PC-3 (cell line): ENCODE measurements at regions of chr9 and their contacts with region 1.

Region 1: DNA sequence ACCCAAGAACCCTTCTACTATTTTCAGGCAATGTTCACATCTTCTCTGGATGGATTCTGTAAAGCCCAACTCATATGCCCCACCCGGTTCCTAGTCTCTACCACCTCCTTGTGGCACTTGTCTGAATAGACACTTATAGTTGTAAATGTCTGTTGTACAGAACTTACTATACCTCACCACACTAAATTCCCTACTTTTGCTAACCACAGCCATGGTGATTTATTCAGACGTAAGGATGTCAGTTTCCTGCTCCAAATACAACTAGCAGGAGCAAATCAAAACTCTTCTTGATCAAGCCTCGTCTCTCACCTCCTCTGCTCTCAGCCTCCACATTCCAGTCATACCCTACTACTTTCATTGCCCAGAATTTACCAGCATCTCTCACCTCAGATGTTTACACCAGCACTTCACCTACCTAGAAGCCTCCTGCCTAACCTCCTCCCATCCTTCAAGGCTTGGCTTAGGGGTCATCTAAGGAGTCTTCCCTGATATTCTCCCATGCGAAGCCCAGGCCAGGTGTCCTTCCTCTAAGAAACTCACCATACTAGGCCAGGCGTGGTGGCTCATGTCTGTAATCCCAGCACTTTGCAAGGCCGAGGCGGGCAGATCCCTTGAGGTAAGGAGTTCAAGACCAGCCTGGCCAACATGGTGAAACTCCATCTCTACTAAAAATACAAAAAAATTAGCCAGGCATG is 75.5 kb downstream of the MAPKAP1 start:
- DNase-seq: peak; percentile 56
- ATAC-seq: peak; percentile 25; the same call in 1 of the 2 replicates
- H3K4me3 ChIP-seq: no peak overlapping the region
- H3K27ac ChIP-seq: peak overlapping the region; percentile 77
- H3K4me1 ChIP-seq: peaks cover 35% of the 10 kb centered on the region
- H3K27me3 ChIP-seq: no peaks in the 10 kb centered on the region
- CTCF ChIP-seq: peak; percentile 70

Region 2: DNA sequence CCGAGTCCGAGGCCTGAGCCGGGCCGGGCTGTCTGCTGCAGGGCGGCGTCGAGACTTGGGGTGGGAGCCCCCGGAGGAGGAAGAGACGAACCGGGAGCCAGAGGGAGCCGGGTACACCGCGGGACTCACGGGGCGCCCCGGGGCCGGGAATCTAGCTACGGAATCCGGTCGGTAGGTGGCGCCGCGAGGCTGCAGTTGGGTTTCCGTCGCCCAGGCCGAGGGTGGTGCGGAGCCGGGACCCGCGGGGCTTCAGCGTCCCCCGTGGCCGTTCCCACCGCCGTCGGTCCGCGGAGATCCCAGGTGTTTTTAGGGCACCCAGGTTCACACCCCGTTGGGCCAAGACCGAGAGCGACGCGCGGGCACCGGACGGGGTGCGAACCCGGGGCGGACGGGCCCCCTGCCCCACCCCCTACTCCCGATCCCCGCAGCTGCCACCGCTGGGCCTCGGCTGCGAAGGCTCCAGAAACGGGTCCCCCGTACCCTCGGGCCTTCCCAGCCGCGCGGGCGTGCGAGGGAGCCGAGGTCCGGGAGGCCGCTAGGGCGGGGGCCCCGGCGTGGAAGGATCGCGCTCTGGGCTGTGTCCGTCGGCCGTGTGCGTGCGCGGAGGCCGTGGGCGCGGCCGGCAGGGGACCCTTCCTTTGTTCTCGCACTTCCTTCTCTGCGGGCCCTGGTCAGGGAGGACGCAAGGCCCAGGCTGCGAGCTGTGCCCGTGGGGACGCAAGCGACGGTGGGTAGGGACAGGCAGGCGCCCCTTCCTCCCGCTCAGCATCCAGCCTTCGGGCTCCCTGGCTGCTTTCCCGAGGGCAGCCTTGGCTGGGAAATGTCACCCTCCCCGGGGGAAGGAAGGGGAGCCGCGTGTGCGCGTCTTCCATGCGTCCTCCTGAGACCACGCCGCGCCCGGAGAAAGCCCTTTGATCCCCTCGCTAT is 223.3 kb before region 1 on chr9:
- CTCF ChIA-PET with region 1: no interaction called
- POLR2A ChIA-PET with region 1: no interaction called
- intact Hi-C with region 1: loop called (anchors 2 kb)
- DNase-seq: peak; percentile 72
- ATAC-seq: peak; percentile 82
- H3K4me3 ChIP-seq: peak overlapping the region; percentile 72
- H3K27ac ChIP-seq: no peak overlapping the region
- H3K4me1 ChIP-seq: peaks cover 8% of the 10 kb centered on the region
- H3K27me3 ChIP-seq: no peaks in the 10 kb centered on the region
- CTCF ChIP-seq: peak; percentile 74

Region 3: DNA sequence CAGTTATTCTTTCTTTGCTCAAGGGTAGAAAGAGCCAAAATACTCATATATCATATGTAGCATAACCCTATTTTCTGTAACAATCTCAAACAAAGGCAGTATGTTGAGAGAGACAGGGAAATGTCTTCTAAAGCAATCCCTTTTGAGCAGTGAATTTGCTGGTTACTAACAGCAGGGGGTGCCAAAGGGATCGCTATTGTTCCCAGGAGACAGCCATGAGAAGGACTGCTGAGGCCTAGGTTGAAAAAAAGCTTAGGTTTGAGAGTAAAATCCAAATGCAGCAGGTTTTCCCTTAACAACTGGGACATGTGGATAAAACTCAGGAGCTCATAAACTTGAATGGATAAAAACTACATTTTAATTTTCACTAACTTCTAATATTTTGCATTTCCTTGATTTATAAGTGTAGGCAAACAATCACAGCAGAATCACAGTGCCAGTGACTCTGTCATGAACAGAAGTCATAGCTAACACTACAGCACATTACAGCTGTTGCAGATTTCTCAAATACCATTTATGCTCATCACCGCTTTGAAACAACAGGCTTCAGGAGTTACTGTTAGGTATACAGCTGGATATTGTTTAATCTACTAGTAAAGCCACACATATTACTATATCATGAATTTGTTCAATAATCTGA is 73.0 kb before region 1 on chr9:
- CTCF ChIA-PET with region 1: no interaction called
- POLR2A ChIA-PET with region 1: no interaction called
- intact Hi-C with region 1: loop called (anchors 5 kb)
- DNase-seq: peak; percentile 70
- ATAC-seq: peak; percentile 63
- H3K4me3 ChIP-seq: no peak overlapping the region
- H3K27ac ChIP-seq: no peak overlapping the region
- H3K4me1 ChIP-seq: no peaks in the 10 kb centered on the region
- H3K27me3 ChIP-seq: no peaks in the 10 kb centered on the region
- CTCF ChIP-seq: peak; percentile 78

Region 4: GRCh38 chr9:125659954-125660353 is 28.4 kb after region 1 on chr9:
- CTCF ChIA-PET with region 1: no interaction called
- POLR2A ChIA-PET with region 1: no interaction called
- intact Hi-C with region 1: no loop called
- DNase-seq: peak; percentile 1
- ATAC-seq: no peak
- H3K4me3 ChIP-seq: no peak overlapping the region
- H3K27ac ChIP-seq: no peak overlapping the region
- H3K4me1 ChIP-seq: peaks cover 12% of the 10 kb centered on the region; the same call in 1 of the 2 replicates
- H3K27me3 ChIP-seq: no peaks in the 10 kb centered on the region
- CTCF ChIP-seq: no peak

Region 5: GRCh38 chr9:125674981-125675973 is 43.7 kb after region 1 on chr9:
- CTCF ChIA-PET with region 1: no interaction called
- POLR2A ChIA-PET with region 1: no interaction called
- intact Hi-C with region 1: no loop called
- DNase-seq: peak; percentile 80
- ATAC-seq: peak; percentile 90
- H3K4me3 ChIP-seq: 0 out of 2 replicates have a peak overlapping the region, but pooled peaks have one; percentile 7
- H3K27ac ChIP-seq: peak overlapping the region; percentile 21
- H3K4me1 ChIP-seq: peaks cover 22% of the 10 kb centered on the region
- H3K27me3 ChIP-seq: no peaks in the 10 kb centered on the region
- CTCF ChIP-seq: no peak

Region 6: GRCh38 chr9:125758986-125759763 is 127.6 kb after region 1 on chr9:
- CTCF ChIA-PET with region 1: no interaction called
- POLR2A ChIA-PET with region 1: no interaction called
- intact Hi-C with region 1: no loop called
- DNase-seq: peak; percentile 44
- ATAC-seq: peak; percentile 95
- H3K4me3 ChIP-seq: peak overlapping the region; percentile 53
- H3K27ac ChIP-seq: no peak overlapping the region
- H3K4me1 ChIP-seq: peaks cover 11% of the 10 kb centered on the region
- H3K27me3 ChIP-seq: no peaks in the 10 kb centered on the region
- CTCF ChIP-seq: no peak